Posterior vena cava (tissue), 2 donors: ENCODE measurements at regions of chr7 and their contacts with region 1.

Region 1: DNA sequence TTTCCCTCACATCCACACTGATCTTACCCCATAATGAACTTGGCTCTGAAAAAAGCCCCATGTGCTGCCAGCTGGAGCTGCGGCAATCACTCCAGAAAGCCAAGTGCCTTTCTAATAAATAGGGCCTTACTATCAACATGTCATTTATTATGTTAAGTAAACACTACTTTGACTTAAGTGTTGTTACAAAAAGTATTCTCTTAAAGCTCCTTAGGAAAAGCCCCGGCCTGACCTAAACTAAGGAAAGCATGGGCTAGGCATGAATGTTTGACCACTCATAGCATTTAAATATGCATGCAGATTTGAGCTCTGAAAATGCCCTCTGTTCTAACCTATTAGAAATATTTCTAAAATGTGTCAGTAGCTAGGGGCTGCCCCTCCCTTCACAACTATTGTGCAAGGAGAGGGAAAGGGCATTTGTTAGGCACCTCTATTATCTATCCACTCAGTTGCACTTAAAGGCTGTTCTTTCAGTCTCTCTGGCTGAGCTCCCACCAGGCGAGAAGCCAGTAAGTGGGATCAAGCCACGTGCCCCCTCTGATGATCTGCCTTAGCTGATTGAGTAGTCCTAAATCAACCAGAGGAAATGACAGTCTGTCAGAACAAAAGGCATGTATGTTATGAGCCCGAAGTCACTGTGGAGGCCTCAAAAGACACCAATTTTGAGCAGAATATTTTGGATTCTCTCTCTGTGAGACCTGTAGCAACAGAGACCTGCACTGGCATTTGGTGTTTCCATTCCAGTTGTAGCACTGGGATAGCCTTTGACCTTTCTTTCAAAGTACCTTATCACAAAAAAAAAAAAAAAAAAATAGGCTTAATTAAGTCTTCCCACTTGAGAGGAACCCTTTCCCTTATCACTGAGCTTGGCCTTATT is 77.1 kb downstream of the ITGB8 start:
- DNase-seq: no peak

Region 2: DNA sequence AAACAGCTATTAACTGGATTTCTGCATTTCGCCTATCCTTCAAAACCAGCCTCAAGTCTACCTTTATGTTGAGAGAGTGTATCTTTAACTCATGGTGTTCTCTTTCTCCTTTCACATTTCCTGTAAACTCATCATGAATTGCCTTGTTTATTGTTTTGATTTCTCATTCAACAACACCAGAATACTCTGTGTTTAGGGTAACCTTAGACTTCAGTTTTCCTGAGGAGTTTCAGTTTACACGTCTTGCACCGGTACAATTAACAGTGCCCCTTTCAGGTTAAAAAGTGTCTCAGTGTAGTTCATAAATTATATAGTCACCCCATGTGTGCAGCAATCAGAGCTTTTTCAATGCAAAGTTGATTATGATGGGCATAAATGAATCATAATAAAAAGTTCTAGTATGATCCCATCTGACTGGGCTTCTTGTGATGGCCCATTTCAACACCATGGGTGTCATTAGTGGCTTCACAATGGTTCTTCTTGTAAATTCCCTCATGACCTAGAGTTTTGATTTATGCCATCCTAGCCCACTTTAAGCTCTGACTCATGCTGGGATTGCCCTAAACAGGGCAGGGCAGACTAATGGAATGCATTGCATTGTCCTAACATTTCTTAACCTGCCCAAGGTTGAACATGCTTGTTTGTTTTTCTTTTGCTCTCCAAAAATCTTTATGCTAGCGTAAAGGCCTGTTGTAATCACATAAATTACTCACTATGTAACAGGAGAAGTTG is 55.1 kb before region 1 on chr7:
- intact Hi-C with region 1: loop called in 1 of 2 experiments (anchors 10 kb)
- DNase-seq: no peak